ENCODE measurements at regions of chr19 and their contacts with region 1.

Region 1: DNA sequence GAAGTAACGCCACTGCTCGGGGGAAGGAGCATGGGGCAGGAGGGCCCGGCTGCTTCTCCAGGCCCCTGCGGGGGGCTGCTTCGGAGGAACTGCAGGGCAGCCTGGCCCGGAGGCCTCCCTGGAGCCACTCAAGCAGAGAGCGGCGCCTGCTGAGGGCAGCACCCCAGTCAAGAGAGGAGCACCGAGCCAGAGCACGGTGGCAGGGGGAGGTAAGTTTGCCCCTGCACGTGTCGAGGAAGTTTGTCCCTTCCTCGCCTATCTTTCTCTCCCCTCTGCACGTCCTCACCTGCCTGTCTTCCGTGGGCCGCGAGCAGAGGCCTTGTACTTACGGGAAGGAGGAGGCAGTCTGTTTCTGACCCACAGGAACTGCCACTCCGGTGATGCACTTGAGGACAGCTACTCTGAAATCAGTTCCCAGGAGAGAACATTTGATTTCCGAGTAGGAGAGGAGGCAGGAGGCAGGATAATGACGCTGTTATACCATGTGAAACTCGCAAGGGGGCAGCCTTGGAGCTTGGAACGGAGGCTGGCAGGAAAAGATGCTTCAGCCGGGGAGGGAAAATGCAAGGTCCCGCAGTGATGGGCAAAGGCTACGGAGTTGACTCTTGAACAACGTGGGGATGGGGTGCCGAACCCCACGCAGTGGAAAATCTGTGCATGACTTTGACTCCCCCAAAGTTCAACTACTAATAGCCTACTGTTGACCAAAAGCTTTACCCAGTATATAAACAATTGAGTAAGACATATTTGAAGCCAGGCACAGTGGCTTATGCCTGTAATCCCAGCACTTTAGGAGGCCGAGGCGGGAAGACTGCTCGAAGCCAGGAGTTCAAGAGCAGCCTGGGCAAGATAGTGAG is 5.0 kb downstream of the FFAR1 start:
- DNase-seq: peak; percentile 83
- H3K4me3 ChIP-seq: no peak overlapping the region
- H3K27ac ChIP-seq: no peak overlapping the region
- H3K4me1 ChIP-seq: no peaks in the 10 kb centered on the region
- H3K27me3 ChIP-seq: peaks cover 3% of the 10 kb centered on the region

Region 2: DNA sequence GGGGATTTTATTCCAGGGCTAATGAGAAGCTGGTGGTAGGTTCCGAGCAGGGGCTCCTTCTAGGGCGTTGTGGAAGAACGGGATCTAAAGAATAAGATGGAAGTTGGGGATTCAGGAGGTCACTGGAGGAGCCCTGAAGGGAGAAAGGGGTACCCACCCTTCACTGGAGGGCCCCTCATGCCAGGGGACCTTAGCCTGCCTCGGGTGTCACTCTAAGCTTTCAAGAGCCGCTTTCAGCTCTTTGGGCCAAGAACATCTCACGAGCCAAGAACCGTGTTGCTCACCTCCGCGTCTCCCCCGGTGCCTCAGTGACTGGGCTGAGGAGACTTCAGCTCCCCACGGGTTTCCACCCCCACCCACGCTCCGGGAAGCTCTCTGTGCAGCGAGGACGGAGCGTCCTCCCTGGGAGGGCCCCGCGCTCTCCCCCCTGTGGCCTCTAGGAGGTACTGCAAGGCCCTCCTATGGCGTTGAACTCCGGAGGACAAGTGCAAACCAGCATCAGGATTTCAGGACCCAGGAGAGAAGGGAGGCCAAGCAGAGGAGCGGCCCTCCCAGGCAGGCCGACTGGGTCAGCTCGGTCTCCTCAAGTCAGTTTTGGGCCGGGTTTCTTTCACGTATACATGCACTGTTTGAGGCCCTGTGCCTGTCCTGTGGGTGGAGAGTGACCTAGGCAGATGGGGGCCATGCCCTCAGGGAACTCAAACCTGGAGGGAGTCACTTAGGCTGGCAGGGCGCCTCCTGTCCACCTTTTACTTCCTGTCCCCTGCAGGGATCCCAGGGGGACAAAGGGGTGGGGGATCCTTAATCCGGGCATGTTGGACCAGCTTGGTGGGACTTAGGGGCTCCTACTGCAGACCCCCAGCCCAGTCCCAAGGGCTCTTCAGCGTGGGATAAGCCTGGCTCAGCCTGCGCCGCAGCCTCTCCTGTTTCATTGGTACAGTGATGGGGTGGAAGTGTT is 142.7 kb after region 1 on chr19:
- in situ Hi-C with region 1: loop called (anchors 10 kb)
- DNase-seq: peak; percentile 87
- H3K4me3 ChIP-seq: no peak overlapping the region
- H3K27ac ChIP-seq: no peak overlapping the region
- H3K4me1 ChIP-seq: no peaks in the 10 kb centered on the region
- H3K27me3 ChIP-seq: peaks cover 31% of the 10 kb centered on the region; the same call in 1 of the 2 replicates